Heart right ventricle (tissue), 16 donors: ENCODE measurements at regions of chr15 and their contacts with region 1.

Region 1: DNA sequence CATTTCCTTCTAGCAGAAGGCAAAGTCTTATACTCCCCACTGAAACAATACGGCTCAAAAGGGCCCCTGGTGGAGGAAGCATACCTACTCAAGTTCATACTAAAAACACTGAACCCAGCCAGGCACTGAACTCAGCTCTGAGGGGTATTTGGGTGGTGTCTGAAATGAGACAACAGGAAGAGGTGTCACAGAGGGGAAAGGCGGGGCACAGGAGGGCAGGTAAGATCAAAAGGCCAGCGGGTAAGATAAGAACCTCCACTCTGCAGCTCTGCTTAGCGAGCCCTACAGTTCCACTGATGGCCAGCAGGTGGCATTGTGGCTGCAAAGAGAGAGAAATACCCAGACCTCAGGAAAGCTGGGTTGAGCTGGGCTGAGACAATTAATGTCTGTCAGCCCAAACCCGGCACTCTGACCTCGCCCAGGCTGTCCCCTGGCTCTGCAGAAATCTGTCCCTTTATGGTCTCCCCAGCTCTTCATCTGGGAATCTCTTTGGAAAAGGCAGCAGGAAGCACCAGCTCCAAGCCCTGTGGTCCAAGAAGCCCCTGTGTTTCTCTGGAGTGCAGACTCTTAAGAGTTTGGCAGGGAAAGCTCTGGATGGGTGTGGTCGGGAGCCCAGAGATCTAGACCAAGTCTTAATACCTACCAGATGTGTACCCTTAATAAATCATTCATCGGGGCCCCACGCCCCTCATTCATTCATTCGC is 8.4 kb downstream of the MFGE8 start:
- DNase-seq: peak; percentile 80 to 86
- ATAC-seq: peak; percentile 45 to 82 (median 72)
- H3K4me3 ChIP-seq: no peak overlapping the region
- H3K27ac ChIP-seq: peak overlapping the region in 8 of 10 donors; percentile 22 to 93 (median 40)
- H3K4me1 ChIP-seq: peaks cover 33 to 91% (median 53%) of the 10 kb centered on the region in 9 donors
- H3K27me3 ChIP-seq: no peaks in the 10 kb centered on the region
- CTCF ChIP-seq: peak; percentile 97 to 100 (median 99)

Region 2: GRCh38 chr15:88956906-88957305 is 52.1 kb after region 1 on chr15:
- intact Hi-C with region 1: no loop called
- DNase-seq: no peak
- ATAC-seq: no peak
- H3K4me3 ChIP-seq: no peak overlapping the region
- H3K27ac ChIP-seq: no peak overlapping the region
- H3K4me1 ChIP-seq: peaks cover 0 to 14% (median 8%) of the 10 kb centered on the region in 9 donors
- H3K27me3 ChIP-seq: no peaks in the 10 kb centered on the region
- CTCF ChIP-seq: no peak

Region 3: DNA sequence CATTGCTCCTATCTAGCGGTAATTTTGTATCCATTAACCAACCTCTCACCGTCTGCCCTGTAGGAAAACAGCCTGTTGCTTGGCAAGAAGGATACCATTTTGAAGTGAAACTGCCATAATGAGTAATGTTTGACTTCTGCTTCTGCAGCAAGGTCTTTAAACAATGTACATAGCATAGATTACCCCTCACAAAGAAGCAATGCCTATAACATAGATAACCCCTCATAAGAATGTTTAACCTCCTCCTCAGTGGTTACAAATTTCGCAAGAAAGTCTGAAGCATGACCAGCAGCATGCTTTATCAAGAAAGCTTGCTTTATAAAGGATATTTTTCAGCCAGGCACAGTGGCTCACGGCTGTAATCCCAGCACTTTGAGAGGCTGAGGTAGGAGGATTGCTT is 69.6 kb after region 1 on chr15:
- intact Hi-C with region 1: no loop called
- DNase-seq: no peak
- ATAC-seq: no peak
- H3K4me3 ChIP-seq: no peak overlapping the region
- H3K27ac ChIP-seq: no peak overlapping the region
- H3K4me1 ChIP-seq: no peaks in the 10 kb centered on the region
- H3K27me3 ChIP-seq: no peaks in the 10 kb centered on the region
- CTCF ChIP-seq: no peak

Region 4: GRCh38 chr15:89003865-89004725 is 99.3 kb after region 1 on chr15:
- intact Hi-C with region 1: loop called in 9 of 10 experiments (anchors 1 to 5 kb)
- DNase-seq: peak; percentile 44 to 45
- ATAC-seq: peak; percentile 79 to 90 (median 84)
- H3K4me3 ChIP-seq: no peak overlapping the region
- H3K27ac ChIP-seq: no peak overlapping the region
- H3K4me1 ChIP-seq: peaks cover 3 to 33% (median 13%) of the 10 kb centered on the region in 9 donors
- H3K27me3 ChIP-seq: no peaks in the 10 kb centered on the region
- CTCF ChIP-seq: peak; percentile 26 to 71 (median 64)

Region 5: DNA sequence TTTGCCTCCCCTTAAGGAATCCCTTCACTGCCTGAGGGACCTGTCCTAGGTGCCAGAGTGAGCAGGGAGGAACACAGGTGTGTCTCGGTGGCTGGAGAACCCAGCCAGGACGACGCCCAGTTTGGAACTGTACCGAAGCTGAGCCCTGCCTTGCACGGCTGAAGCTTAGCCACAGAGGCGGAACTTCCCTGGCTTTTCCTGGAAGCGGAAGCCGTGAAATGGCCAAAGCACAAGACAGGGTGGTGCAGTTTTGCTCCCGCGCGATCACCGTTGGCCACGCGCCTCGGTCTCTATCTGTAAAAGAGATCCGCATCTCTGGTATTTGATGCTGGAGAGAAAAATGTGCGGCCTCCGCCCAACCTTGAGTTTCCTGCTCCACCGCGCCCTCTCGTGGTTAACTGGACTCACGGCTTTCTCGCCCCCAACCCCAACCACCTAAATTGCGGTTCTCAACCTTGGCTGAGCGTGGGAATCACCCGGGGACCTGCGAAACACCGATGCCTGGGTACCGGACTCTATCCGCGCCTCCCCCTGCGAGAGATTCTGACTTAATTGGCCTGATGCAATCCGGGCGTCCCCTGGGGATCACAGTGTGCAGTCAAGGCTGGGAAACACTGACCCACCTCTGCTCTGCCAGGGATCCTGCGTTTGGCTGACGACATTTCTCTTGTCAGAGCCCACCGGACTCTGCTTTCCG is 112.7 kb after region 1 on chr15:
- intact Hi-C with region 1: loop called in 6 of 10 experiments (anchors 1 to 5 kb)
- DNase-seq: peak; percentile 79 to 83
- ATAC-seq: peak; percentile 61 to 78 (median 69)
- H3K4me3 ChIP-seq: peak overlapping the region in 9 of 10 donors; percentile 2 to 49 (median 47)
- H3K27ac ChIP-seq: peak overlapping the region; percentile 16 to 85 (median 80)
- H3K4me1 ChIP-seq: peaks cover 2 to 53% (median 35%) of the 10 kb centered on the region in 9 donors
- H3K27me3 ChIP-seq: no peaks in the 10 kb centered on the region
- CTCF ChIP-seq: peak; percentile 68 to 86 (median 80)

Region 6: DNA sequence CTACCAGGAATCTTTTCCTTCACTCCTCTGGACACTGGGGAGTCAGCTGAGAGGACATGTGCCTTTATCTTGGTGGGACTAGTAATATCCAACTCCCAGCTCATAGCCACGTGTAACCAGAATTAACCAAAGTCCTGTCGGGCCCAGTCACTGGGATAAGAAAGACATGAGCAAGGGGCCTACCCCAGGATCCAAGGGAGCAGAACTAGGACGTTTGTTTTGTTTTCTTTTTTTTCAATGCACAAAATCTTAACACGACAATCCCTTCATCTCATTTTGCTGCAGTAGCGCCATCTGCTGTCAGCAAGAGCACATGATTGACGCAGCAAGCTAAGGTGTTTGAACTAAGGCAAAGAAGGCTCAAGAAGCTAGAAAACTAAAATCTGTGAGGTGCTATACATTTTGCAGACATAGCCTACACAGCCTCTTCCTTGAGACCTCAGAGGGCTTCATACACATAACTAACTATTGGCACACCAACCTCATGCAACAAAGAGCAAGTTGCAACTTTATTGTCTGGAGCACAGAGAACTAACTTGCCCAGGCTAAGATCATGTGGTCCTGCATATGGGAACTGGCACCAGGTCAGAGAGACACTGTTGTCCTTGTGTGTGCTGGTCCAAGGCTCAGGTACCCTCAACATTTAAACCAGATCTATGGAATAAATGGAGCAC is 273.0 kb after region 1 on chr15:
- intact Hi-C with region 1: loop called (anchors 2 to 10 kb)
- DNase-seq: peak; percentile 40 to 77
- ATAC-seq: peak in 7 of 8 donors; percentile 25 to 72 (median 54)
- H3K4me3 ChIP-seq: no peak overlapping the region
- H3K27ac ChIP-seq: peak overlapping the region in 7 of 10 donors; percentile 9 to 58 (median 39)
- H3K4me1 ChIP-seq: peaks cover 0 to 53% (median 21%) of the 10 kb centered on the region in 9 donors
- H3K27me3 ChIP-seq: no peaks in the 10 kb centered on the region
- CTCF ChIP-seq: peak; percentile 56 to 90 (median 86)

Region 7: GRCh38 chr15:89243691-89244471 is 339.1 kb after region 1 on chr15 and contains the start of gene FANCI:
- intact Hi-C with region 1: loop called in 1 of 10 experiments (anchors 10 kb)
- DNase-seq: peak; percentile 94 to 96
- ATAC-seq: peak; percentile 98 to 100 (median 99)
- H3K4me3 ChIP-seq: peak within 1 kb of the TSS; percentile 30 to 87 (median 73)
- H3K27ac ChIP-seq: peak within 1 kb of the TSS in 9 of 10 donors; percentile 2 to 82 (median 34)
- H3K4me1 ChIP-seq: peaks cover 4 to 23% (median 14%) of the 10 kb centered on the region in 9 donors
- H3K27me3 ChIP-seq: no peaks in the 10 kb centered on the region
- CTCF ChIP-seq: peak in 8 of 9 donors; percentile 26 to 73 (median 58)
- total RNA-seq, gene FANCI: 1.6 to 9.9 (median 2.7) TPM